Right ventricle myocardium inferior (tissue), 1 donor: ENCODE measurements at regions of chr3 and their contacts with region 1.

Region 1: DNA sequence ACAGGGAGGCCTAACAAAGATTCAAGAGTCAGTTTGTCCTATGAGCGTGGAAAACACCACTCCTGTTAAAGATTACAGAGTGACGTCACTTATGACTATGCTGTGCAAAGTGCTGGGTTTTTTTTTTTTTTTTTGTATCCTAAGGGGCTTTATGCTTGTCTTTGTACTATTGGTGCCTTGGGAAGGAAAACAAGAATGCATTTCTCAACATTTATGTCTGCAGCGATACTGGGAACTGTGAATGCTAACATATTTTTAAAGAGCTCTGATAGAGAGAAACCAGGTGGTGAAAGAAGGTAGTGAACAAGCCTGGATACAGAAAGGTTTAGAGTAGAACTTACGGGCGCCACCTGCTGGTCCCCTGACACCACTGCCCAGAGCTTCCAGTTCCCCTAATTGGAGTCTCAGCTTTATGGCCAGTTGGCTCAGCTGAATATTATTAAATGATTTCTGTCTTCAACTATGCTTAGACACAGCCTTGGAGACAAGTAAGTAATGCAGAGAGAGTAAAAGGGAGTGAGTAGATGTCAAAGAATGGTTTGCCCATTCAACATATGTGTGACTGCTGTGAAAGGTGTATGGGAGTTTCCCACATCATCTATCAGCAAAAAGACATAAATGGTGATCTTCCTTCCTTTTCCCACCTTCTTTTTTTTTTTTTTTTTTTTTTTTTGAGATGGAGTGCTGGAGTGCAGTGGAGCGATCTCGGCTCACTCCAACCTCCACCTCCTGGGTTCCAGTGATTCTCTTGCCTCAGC is 807.9 kb upstream of the CFAP20DC start:
- DNase-seq: peak; percentile 74
- ATAC-seq: peak; percentile 94

Region 2: GRCh38 chr3:59212128-59212779 is 645.5 kb before region 1 on chr3:
- intact Hi-C with region 1: loop called (anchors 5 kb)
- DNase-seq: no peak
- ATAC-seq: peak; percentile 60

Region 3: GRCh38 chr3:59607656-59608055 is 250.1 kb before region 1 on chr3:
- intact Hi-C with region 1: loop called (anchors 10 kb)
- DNase-seq: no peak
- ATAC-seq: peak; percentile 53